T-cell (primary cell): ENCODE measurements at regions of chr1 and their contacts with region 1.

Region 1: DNA sequence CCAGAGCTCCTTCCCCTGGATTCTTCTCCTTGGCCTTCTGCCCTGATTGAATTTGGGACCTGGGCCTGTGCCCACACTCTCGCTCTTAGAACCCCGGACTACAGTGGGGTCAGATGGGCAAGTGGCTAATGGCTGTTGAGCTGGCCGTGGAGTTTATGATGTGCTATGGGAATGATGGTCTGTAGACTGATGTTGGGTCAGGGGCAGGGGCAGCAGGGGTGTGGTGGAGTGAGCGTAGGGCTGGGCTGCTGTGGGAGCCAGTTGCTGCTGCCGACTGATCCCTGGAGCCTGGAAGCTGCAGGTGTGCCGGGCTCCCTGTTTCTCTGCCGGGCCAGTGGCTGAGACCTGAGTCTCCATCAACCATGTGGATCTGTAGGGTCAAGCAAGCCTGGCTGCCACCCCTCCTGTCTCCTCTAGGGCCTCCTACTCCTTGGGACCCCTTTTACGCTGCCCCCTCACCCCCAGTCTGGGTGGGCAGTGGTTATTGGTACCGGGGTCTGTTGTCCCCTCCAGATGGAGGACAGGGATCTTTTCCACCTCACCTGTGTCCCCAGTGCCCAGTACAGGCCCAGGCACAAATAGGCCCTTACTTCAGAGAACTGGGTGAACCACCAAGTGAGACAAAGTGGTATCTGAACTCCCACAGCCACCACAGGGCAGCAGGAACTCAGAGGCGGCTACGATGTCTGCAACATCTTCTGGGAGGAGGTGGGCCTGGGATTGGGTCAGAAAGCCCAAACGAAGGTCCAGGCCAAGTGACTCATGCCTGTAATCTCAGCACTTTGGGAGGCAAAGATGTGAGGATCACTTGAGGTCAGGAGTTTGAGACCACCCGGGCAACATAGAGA is 5.1 kb downstream of the PODN start:
- DNase-seq: peak in 1 of 35 experiments; percentile 9
- ATAC-seq: no peak
- H3K4me3 ChIP-seq: no peak overlapping the region
- H3K4me3 Mint-ChIP-seq: no peak overlapping the region
- H3K27ac ChIP-seq: no peak overlapping the region
- H3K27ac Mint-ChIP-seq: no peak overlapping the region
- H3K4me1 ChIP-seq: peaks cover 0 to 13% of the 10 kb centered on the region in 2 experiments
- H3K4me1 Mint-ChIP-seq: peaks cover 5 to 12% (median 11%) of the 10 kb centered on the region in 3 donors
- H3K27me3 ChIP-seq: peaks cover 3 to 35% of the 10 kb centered on the region in 2 experiments
- H3K27me3 Mint-ChIP-seq: peaks cover 20 to 29% of the 10 kb centered on the region in 2 donors

Region 2: DNA sequence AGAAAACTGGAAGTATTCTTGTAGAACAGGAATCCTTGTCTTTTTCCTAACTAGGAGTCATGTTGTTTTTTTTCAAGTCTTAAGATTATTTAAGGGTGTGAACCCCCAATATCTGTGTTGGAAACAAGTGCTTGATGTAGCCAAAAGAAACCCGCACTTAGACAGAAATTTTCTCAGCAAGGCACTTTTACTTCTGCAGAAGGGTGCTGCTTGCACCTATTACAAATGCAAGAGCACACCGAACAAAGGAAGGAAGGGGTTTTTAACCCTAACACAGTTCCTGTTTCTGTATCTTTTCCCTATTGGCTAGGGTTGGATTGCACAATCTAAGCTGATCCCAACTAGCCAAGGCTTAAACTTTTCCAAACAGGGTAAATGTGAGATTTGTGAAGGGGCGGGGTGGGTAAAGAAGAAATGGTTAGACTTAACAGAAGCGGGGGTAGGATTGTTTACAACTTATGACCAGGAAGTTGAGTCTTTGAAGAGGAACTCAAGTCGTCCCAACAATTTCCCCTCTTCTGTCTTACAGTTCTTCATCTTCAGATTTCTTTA is 850.1 kb before region 1 on chr1:
- CTCF ChIA-PET with region 1: no interaction called
- POLR2A ChIA-PET with region 1: no interaction called
- DNase-seq: no peak
- ATAC-seq: no peak
- H3K4me3 ChIP-seq: no peak overlapping the region
- H3K4me3 Mint-ChIP-seq: no peak overlapping the region
- H3K27ac ChIP-seq: no peak overlapping the region
- H3K27ac Mint-ChIP-seq: no peak overlapping the region
- H3K4me1 ChIP-seq: no peaks in the 10 kb centered on the region
- H3K4me1 Mint-ChIP-seq: no peaks in the 10 kb centered on the region
- H3K27me3 ChIP-seq: no peaks in the 10 kb centered on the region
- H3K27me3 Mint-ChIP-seq: no peaks in the 10 kb centered on the region

Region 3: DNA sequence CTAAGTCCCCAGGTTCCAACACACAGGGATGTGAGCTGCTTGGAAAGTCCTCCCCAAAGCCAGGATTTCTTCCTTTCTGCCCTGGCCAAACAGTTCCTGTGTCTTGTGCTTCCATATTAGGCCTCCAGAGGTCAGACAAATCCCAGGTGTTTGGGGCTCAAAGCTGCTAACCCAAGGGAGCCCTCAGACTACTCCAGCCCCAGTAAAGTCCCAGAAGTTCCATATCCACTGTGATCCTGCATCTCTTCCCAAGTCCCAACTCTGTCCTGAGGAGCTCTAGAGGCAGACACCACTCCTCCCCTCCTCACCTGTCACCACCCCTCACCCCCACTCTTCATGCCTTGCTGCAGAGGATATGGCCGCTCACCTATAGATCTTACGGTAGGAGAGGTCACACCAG is 199.0 kb after region 1 on chr1:
- CTCF ChIA-PET with region 1: no interaction called
- POLR2A ChIA-PET with region 1: no interaction called
- DNase-seq: no peak
- ATAC-seq: no peak
- H3K4me3 ChIP-seq: no peak overlapping the region
- H3K4me3 Mint-ChIP-seq: no peak overlapping the region
- H3K27ac ChIP-seq: no peak overlapping the region
- H3K27ac Mint-ChIP-seq: no peak overlapping the region
- H3K4me1 ChIP-seq: no peaks in the 10 kb centered on the region
- H3K4me1 Mint-ChIP-seq: no peaks in the 10 kb centered on the region
- H3K27me3 ChIP-seq: no peaks in the 10 kb centered on the region
- H3K27me3 Mint-ChIP-seq: no peaks in the 10 kb centered on the region

Region 4: GRCh38 chr1:53738205-53739108 is 671.3 kb after region 1 on chr1:
- CTCF ChIA-PET with region 1: no interaction called
- POLR2A ChIA-PET with region 1: interaction called in 1 of 2 experiments, 11 read pairs
- DNase-seq: no peak
- ATAC-seq: peak in 3 of 4 experiments; percentile 12 to 28 (median 22)
- H3K4me3 ChIP-seq: peak overlapping the region in 1 of 2 donors; percentile 66
- H3K4me3 Mint-ChIP-seq: peak overlapping the region; percentile 37 to 50 (median 40)
- H3K27ac ChIP-seq: no peak overlapping the region
- H3K27ac Mint-ChIP-seq: no peak overlapping the region
- H3K4me1 ChIP-seq: peaks cover 0 to 11% of the 10 kb centered on the region in 2 experiments
- H3K4me1 Mint-ChIP-seq: peaks cover 0 to 8% (median 7%) of the 10 kb centered on the region in 3 donors
- H3K27me3 ChIP-seq: peaks cover 5 to 37% of the 10 kb centered on the region in 2 experiments
- H3K27me3 Mint-ChIP-seq: peaks cover 46 to 60% of the 10 kb centered on the region in 2 donors